Naive thymus-derived CD8-positive, alpha-beta T cell (primary cell): ENCODE measurements at regions of chr12 and their contacts with region 1.

Region 1: GRCh38 chr12:52582971-52583456 is 9.4 kb upstream of the KRT74 start:
- DNase-seq: peak; percentile 30 to 84 (median 74)
- ATAC-seq: peak in 1 of 2 donors; percentile 29
- H3K4me3 Mint-ChIP-seq: no peak overlapping the region
- H3K27ac Mint-ChIP-seq: peak overlapping the region; percentile 4 to 96 (median 88)
- H3K4me1 Mint-ChIP-seq: peaks cover 46 to 58% (median 56%) of the 10 kb centered on the region in 4 donors
- H3K27me3 Mint-ChIP-seq: peaks cover 0 to 1% (median 0%) of the 10 kb centered on the region in 5 donors

Region 2: DNA sequence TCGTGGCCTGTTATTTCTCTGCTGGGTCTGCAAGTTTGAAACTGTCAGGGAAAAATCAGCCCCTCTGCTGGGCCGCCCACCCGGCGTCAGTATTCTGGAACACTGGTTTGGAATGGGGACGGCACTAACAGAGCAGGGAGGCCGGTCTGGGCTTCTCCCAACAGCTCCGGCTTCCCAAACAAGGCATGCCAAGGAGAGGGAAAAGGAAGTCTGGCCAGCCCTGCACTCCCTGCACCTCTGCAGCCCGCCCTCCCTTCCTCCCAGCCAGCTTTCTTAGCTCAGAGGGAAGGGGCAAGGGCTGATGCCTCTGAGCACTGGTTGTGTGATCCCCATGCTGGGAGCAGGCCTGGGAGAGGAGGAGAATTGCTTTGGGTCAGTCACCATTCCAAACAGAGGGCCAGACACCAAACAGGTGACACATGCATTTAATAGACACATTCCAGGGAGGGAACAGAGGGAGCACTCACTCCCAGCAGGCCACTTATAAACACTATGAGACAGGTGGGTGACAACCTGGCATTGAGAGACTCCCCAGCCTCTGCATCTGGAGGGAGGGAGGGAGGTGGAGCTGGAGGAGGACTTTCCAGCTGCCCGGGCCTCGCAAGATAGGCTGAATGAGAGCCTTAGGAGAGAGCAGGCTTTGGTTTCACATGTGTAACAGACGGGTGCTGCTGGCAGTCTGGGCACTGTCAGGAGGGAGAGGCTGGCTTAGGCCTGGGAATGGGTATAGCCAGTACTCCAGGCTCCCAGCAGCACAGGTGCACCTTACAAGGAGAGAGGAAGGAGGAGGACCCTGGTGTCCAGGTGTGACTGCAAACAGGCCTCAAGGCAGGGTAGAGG is 159.1 kb before region 1 on chr12:
- POLR2A ChIA-PET with region 1: no interaction called
- DNase-seq: no peak
- ATAC-seq: no peak
- H3K4me3 Mint-ChIP-seq: no peak overlapping the region
- H3K27ac Mint-ChIP-seq: peak overlapping the region in 1 of 10 donors; percentile 74
- H3K4me1 Mint-ChIP-seq: peaks cover 0 to 9% (median 2%) of the 10 kb centered on the region in 4 donors
- H3K27me3 Mint-ChIP-seq: peaks cover 4 to 42% (median 8%) of the 10 kb centered on the region in 5 donors

Region 3: GRCh38 chr12:52870351-52871290 is 287.6 kb after region 1 on chr12:
- POLR2A ChIA-PET with region 1: interaction called, 45 read pairs
- DNase-seq: peak; percentile 68 to 94 (median 84)
- ATAC-seq: peak; percentile 67 to 81
- H3K4me3 Mint-ChIP-seq: peak overlapping the region in 1 of 10 donors; percentile 24
- H3K27ac Mint-ChIP-seq: peak overlapping the region in 9 of 10 donors; percentile 29 to 94 (median 77)
- H3K4me1 Mint-ChIP-seq: peaks cover 24 to 65% (median 52%) of the 10 kb centered on the region in 4 donors
- H3K27me3 Mint-ChIP-seq: peaks cover 0 to 7% (median 0%) of the 10 kb centered on the region in 5 donors

Region 4: DNA sequence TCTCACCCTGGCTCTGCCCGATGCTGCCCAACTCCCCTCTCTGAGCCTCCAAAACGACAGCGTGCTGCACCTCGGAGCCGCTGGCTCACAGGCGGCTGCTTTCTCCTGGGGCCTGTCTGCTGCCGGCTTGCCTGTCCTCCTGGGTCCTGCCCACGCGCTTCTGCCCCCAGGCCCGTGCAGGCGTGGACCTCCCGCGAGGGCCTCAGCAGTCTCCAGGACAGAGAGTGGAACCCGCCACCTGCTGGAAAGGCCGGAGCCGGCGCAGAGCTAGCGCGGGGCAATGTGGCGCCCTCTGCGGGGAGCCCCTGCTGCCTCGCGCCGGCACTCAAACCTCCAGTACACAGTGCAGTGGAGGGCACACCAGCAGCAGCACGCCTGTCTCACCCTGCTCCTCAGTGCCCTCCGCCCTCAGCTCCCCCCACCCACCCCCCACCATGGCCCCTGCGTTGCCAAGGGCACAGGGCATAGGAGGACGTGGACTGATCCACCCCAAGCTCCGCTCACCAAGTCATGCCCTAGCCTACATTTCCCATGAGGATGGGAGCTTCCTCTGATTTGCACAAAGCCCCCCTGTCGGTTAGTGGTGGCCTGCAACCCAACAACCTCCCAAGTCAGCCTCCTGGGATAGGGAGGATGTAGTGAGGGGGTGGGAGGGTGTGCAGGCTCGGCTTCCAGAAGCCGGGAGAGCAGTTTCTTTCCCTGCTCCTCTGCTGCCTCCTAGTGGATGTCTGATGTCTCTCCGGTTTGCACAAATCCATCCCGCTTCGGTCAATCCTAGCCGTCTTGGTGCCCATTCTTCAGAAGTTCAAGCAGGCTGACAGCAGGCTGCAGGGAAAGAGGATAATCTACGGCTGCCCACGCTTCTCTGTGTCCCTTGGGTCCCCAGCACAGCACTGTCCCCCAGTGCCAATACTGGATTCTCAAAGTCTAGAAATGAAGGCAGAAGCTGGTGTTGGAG is 296.7 kb after region 1 on chr12:
- POLR2A ChIA-PET with region 1: interaction called, 12 read pairs
- DNase-seq: peak; percentile 54 to 83 (median 68)
- ATAC-seq: peak; percentile 97 to 98
- H3K4me3 Mint-ChIP-seq: peak overlapping the region; percentile 54 to 73 (median 66)
- H3K27ac Mint-ChIP-seq: peak overlapping the region in 2 of 10 donors; percentile 43 to 62
- H3K4me1 Mint-ChIP-seq: peaks cover 2 to 22% (median 14%) of the 10 kb centered on the region in 4 donors
- H3K27me3 Mint-ChIP-seq: peaks cover 3 to 19% (median 15%) of the 10 kb centered on the region in 5 donors